ENCODE measurements at regions of chr10 and their contacts with region 1.

Region 1: DNA sequence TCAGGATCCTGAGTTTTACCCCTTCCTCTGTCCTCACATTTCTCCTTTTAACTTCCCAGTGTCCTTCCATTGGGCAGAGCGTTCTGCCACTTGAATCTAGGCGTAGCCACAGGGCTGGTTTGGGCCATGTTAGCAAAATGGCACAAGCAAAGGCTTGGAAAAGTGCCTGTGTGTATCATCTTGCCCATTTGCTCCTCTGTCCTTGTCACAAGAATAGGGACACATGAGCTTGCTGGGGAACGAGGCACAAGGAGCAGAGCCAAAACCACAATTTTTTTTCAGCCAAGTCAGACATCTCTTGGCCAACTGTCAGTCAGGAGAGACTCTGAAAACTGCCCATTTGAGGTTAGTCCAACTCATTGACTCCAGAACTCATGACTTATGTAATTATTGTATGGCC is 285.2 kb downstream of the ZNF248 start:
- DNase-seq: no peak
- H3K4me3 ChIP-seq: no peak overlapping the region
- H3K27ac ChIP-seq: no peak overlapping the region
- H3K4me1 ChIP-seq: no peaks in the 10 kb centered on the region
- H3K27me3 ChIP-seq: no peaks in the 10 kb centered on the region
- CTCF ChIP-seq: no peak

Region 2: GRCh38 chr10:37520488-37520887 is 51.7 kb before region 1 on chr10:
- CTCF ChIA-PET with region 1: no interaction called
- dilution Hi-C with region 1: no loop called
- in situ Hi-C with region 1: no loop called
- intact Hi-C with region 1: loop called (anchors 10 kb)
- DNase-seq: no peak
- H3K4me3 ChIP-seq: no peak overlapping the region
- H3K27ac ChIP-seq: no peak overlapping the region
- H3K4me1 ChIP-seq: no peaks in the 10 kb centered on the region
- H3K27me3 ChIP-seq: no peaks in the 10 kb centered on the region
- CTCF ChIP-seq: no peak